ENCODE measurements at regions of chr15 and their contacts with region 1.

Region 1: GRCh38 chr15:39624806-39625205 is 43.9 kb downstream of the THBS1 start:
- DNase-seq: peak; percentile 65
- ATAC-seq: peak; percentile 76
- H3K4me3 Mint-ChIP-seq: peak overlapping the region; percentile 71
- H3K27ac Mint-ChIP-seq: peak overlapping the region; percentile 99
- H3K4me1 Mint-ChIP-seq: peaks cover 66% of the 10 kb centered on the region
- H3K27me3 Mint-ChIP-seq: no peaks in the 10 kb centered on the region

Region 2: GRCh38 chr15:39526206-39526605 is 98.6 kb before region 1 on chr15:
- POLR2A ChIA-PET with region 1: no interaction called
- DNase-seq: no peak
- ATAC-seq: no peak
- H3K4me3 Mint-ChIP-seq: no peak overlapping the region
- H3K27ac Mint-ChIP-seq: no peak overlapping the region
- H3K4me1 Mint-ChIP-seq: no peaks in the 10 kb centered on the region
- H3K27me3 Mint-ChIP-seq: no peaks in the 10 kb centered on the region

Region 3: DNA sequence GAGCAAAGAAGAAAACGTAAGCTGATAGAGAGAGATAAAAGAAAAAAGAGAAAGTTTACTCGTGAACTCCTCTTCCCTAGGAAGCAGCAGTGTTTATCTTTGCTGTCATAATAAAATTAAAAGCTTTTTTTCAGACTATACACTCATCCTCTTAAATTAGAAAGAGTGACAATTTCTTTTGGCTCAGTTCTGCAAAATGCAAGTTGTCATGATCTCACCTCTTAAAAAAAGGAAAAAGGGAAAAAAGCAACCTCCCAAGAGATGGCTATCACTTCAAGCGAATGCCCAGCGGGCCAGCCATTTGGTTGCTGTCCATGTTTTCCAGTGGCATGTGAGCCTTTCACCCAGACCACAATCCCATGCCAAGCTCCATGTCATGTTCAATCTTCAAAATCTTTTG is 51.0 kb before region 1 on chr15:
- POLR2A ChIA-PET with region 1: no interaction called
- DNase-seq: no peak
- ATAC-seq: no peak
- H3K4me3 Mint-ChIP-seq: no peak overlapping the region
- H3K27ac Mint-ChIP-seq: no peak overlapping the region
- H3K4me1 Mint-ChIP-seq: no peaks in the 10 kb centered on the region
- H3K27me3 Mint-ChIP-seq: peaks cover 33% of the 10 kb centered on the region

Region 4: GRCh38 chr15:39642011-39642640 is 17.3 kb after region 1 on chr15:
- POLR2A ChIA-PET with region 1: interaction called, 12 read pairs
- DNase-seq: no peak
- ATAC-seq: no peak
- H3K4me3 Mint-ChIP-seq: no peak overlapping the region
- H3K27ac Mint-ChIP-seq: no peak overlapping the region
- H3K4me1 Mint-ChIP-seq: peaks cover 4% of the 10 kb centered on the region
- H3K27me3 Mint-ChIP-seq: peaks cover 6% of the 10 kb centered on the region

Measured in activated naive CD8-positive, alpha-beta T cell treated with anti-CD3 and anti-CD28 coated beads, Interleukin-2, amount 10 ng/mL, durations not matched to agents 7 days and 5 days (primary cell).